ENCODE measurements at regions of chr5 and their contacts with region 1.

Region 1: DNA sequence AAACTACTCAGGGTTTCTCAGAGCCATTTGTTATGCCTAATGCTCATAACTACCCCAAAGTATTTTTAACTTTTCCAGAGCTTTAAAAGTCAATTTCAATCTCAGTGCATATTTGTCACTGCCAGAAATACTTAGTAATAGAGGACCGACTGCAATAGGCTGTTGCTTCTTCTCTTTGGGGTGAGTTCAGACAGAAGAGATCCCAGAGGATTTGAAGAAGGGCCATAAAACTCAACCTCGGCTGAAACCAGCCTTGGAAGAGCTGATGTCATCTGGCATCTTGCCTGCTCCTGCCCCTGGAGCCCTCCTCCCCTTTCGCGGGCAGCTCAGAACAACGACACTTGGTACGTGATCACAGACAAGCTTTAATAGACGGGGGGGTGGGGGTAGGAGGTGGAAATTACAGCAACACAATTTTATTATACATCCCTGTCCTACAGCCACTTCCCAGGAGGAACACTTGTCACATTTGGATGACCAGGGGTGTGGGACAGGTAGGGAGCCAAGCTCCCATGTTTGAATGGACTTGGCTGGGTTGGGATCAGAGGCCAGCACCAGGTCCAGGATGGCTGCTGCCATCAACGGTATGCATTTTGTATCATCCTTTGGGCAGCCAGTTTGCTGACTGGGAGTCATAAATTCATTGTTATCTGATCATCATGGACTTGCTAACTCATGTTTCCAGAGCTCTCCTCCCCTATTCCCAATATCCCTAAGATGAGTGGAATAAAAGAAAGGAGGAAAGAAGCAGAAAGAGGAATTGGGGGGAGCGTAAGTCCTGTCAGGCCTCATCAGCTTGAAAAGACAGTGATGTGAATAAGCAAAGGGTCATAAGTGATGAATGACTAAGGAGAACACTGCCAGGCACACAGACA is 186.6 kb upstream of the PANK3 start:
- DNase-seq: peak in 1 of 5 donors; percentile 27
- ATAC-seq: peak in 1 of 4 donors; percentile 47
- H3K4me3 ChIP-seq: no peak overlapping the region
- H3K27ac ChIP-seq: peak overlapping the region in 1 of 12 donors; percentile 46
- H3K4me1 ChIP-seq: peaks cover 0 to 3% (median 0%) of the 10 kb centered on the region in 12 donors
- H3K27me3 ChIP-seq: peaks cover 0 to 6% (median 0%) of the 10 kb centered on the region in 9 donors
- CTCF ChIP-seq: no peak
- POLR2A ChIP-seq: no peak

Region 2: GRCh38 chr5:168311061-168311566 is 454.7 kb before region 1 on chr5:
- intact Hi-C with region 1: no loop called
- DNase-seq: no peak
- ATAC-seq: no peak
- H3K4me3 ChIP-seq: no peak overlapping the region
- H3K27ac ChIP-seq: no peak overlapping the region
- H3K4me1 ChIP-seq: no peaks in the 10 kb centered on the region
- H3K27me3 ChIP-seq: peaks cover 0 to 4% (median 0%) of the 10 kb centered on the region in 9 donors
- CTCF ChIP-seq: no peak
- POLR2A ChIP-seq: no peak

Region 3: DNA sequence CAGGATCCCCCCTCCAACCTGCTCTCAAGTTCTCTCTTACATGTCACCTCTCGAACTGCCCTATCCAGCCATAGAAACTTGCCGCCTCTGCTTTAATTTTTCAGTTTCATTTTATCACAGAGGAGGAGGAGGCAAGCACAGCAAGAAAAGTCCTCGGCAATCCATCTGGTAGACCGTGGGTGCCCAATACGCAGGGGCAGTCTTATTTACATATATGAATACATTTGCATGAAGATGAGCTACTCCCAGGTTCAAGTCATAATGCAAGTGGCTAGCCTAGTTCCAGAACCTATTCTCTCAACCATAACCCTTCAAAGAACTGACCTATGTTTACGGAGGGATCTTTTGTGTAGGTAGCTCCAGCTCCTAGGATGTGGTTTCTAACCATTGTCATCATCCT is 36.5 kb after region 1 on chr5:
- intact Hi-C with region 1: loop called in 1 of 10 experiments (anchors 2 kb)
- DNase-seq: no peak
- ATAC-seq: no peak
- H3K4me3 ChIP-seq: no peak overlapping the region
- H3K27ac ChIP-seq: no peak overlapping the region
- H3K4me1 ChIP-seq: no peaks in the 10 kb centered on the region
- H3K27me3 ChIP-seq: no peaks in the 10 kb centered on the region
- CTCF ChIP-seq: no peak
- POLR2A ChIP-seq: no peak